H1 (cell line): ENCODE measurements at regions of chr11 and their contacts with region 1.

Region 1: GRCh38 chr11:2420502-2421225 is 20.1 kb downstream of the TSSC4 start:
- DNase-seq: peak; percentile 65 to 85
- H3K4me3 ChIP-seq: no peak overlapping the region
- H3K27ac ChIP-seq: no peak overlapping the region
- H3K4me1 ChIP-seq: peaks cover 0 to 5% (median under 1%) of the 10 kb centered on the region in 4 experiments; a peak in 2 of 7 replicates
- H3K27me3 ChIP-seq: peaks cover 0 to 3% (median 0%) of the 10 kb centered on the region in 4 experiments; a peak in 2 of 7 replicates
- CTCF ChIP-seq: peak in 2 of 3 experiments; percentile 94 to 97; a peak in 3 of 4 replicates
- EP300 ChIP-seq: no peak
- POLR2A ChIP-seq: no peak
- RAD21 ChIP-seq: peak; percentile 92 to 95

Region 2: DNA sequence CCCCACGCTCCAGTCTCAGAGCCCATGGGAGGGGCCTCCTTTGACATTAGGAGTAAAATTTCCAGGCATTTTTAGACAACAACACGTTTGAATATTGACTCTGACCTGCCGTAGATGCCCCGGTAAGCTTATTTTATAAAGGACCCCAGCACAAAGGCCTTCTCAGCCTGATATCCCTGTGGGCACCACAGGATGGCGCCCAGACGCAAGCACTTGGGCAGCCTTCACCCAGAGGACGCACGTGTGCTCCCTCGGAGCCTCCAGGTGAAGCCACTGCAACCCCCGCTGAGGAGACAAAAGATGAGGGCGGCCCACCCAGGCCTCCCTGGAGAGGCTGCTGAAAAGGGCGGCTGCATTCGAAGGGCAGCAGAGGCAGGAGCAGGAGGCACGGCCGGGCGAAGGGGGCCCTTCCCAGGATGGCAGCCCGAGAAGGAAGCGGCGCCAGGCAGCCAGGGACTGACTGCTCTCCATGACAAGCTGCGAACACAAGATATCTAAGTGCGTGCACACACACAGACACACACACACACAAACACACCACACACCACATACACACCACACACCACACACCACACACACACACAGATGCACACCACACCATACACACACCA is 233.9 kb before region 1 on chr11:
- CTCF ChIA-PET with region 1: interaction called, 50 read pairs
- POLR2A ChIA-PET with region 1: no interaction called
- DNase-seq: peak in 1 of 2 experiments; percentile 69
- H3K4me3 ChIP-seq: no peak overlapping the region
- H3K27ac ChIP-seq: no peak overlapping the region
- H3K4me1 ChIP-seq: no peaks in the 10 kb centered on the region; a peak in 2 of 7 replicates
- H3K27me3 ChIP-seq: peaks cover 0 to 16% (median 5%) of the 10 kb centered on the region in 4 experiments; a peak in 2 of 7 replicates
- CTCF ChIP-seq: peak; percentile 66 to 75 (median 69)
- EP300 ChIP-seq: no peak
- POLR2A ChIP-seq: no peak
- RAD21 ChIP-seq: peak; percentile 62 to 77

Region 3: DNA sequence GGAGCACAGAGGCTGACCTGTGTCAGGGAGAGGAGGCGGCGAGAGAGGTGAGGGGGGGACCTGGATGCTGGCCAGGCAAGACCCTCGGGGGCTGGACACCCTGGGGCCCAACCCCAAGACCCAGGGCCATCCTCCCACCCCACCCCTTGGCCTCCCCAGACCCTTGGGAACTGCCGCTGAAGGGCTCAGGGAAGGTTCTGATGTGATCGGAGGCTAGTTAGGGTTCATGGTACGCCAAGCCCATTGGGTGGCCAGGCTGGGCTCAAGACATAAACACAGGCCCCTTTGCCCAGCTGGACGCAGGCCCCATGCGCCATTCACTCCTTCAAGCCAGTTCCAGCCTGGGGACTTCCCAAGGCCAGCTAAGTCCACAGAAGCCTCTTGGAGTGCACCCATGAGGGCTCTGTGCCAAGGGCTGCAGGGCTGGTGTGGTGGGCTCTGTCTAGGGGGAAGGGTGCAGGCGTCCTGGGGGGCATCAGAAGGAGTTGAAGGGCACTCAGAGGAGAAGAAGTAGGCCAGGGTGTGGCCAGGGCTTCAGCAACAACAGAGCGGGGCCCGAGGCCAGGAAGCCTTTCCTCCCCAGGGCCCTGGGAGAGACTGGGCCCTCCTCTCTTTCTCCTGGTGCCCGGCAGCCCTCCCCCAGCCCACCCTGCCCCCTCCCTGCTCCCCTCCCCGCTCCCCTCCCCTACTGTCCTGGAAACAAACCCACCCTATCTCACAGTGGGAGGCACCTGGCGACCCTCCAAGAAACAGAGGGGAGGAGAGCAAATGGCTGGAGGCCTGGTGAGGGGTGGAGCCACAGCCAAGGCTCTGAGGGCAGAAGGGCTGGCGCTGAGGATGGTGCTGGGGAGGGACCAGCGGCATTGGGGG is 105.9 kb before region 1 on chr11:
- CTCF ChIA-PET with region 1: interaction called, 39 read pairs
- POLR2A ChIA-PET with region 1: no interaction called
- DNase-seq: no peak
- H3K4me3 ChIP-seq: no peak overlapping the region
- H3K27ac ChIP-seq: no peak overlapping the region
- H3K4me1 ChIP-seq: no peaks in the 10 kb centered on the region
- H3K27me3 ChIP-seq: peaks cover 0 to 1% (median 0%) of the 10 kb centered on the region in 4 experiments; a peak in 1 of 7 replicates
- CTCF ChIP-seq: no peak
- EP300 ChIP-seq: no peak
- POLR2A ChIP-seq: no peak
- RAD21 ChIP-seq: no peak

Region 4: DNA sequence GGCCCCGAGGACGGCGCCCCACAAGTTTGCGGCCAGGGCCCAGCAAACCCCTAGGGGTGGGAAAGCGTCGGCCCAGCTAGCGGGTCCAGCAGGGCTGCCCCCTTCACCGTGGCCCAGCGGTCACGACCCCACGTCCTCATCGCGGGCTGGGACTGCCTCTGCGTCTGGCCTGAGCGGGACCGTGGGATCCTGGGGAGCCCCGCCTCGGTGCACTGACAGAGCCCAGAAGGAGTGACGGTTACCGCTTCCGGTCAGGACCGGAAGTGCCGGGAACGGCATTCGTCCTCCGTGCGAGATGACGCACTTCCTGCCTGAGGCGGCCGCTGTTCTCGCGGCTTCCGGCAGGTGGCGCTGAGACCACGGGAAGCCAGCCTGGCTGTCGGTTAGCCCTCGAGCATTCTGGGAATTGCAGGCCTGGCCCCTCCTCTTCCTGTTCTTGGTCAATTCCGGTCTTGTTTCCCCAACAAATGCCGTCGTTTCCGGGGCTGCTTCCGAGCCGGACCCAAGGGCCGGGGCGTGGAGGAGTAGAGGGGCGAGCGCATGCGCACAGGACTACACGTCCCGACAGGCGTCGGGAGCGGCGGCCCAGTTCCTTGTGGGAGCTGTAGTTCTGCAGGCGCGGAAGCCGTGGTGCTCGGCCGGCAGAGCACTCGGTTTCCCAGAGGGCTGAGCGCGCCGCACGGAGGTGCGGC is 20.4 kb before region 1 on chr11 and contains the start of gene TSSC4:
- CTCF ChIA-PET with region 1: interaction called, 196 read pairs
- POLR2A ChIA-PET with region 1: interaction called, 17 read pairs
- DNase-seq: peak; percentile 100
- H3K4me3 ChIP-seq: peak within 1 kb of the TSS; percentile 86 to 98 (median 97)
- H3K27ac ChIP-seq: peak within 1 kb of the TSS; percentile 78
- H3K4me1 ChIP-seq: peaks cover 0 to 17% (median 6%) of the 10 kb centered on the region in 4 experiments; a peak in 5 of 7 replicates
- H3K27me3 ChIP-seq: no peaks in the 10 kb centered on the region
- CTCF ChIP-seq: peak in 2 of 3 experiments; percentile 92 to 100; a peak in 3 of 4 replicates
- EP300 ChIP-seq: no peak
- POLR2A ChIP-seq: peak in 1 of 2 experiments; percentile 61; a peak in 1 of 3 replicates
- RAD21 ChIP-seq: peak; percentile 74 to 76
- total RNA-seq, gene TSSC4: 39.3 and 44.3 TPM in 2 replicates

Region 5: DNA sequence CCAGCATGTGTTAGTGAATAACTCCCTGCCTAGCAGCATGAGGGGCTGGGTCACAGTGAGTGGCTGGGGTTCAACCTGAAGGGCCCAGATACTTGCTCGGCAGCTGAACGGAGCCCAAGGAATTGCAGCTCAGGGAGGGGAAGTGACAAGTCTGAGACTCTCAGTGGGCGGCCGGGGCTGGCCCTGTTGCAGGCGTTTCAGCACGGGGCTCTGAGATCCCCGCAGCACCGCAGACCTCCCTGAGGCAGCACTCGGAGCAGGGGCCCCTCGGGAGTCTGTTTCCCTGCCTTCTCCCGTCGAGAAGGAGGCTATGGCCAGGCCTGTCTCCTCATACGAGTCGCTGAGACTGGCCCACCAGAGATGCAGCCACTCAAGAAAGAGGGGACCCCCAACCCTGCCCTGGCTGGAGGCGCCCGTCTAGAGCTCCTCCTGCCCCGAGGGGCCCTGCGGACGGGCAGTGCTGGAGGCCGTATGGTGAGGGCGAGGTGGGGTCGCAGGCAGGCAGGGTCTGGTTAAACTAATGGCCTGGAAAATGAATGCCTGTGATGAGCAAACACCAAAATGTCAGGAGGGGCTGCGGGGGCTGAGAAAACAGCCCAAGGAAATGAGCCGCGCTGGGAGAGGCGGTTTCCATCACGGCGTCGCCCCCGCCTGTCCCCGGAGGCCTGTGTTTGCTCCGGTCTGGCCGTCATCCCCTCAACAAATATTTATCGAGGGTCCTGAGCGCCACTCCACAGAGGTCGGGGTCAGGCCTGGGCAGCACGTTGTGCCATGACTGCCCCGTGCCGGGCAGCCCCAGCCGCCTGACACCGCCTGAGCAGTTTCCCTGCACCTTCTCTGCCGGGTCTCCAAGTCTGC is 10.8 kb before region 1 on chr11:
- CTCF ChIA-PET with region 1: interaction called, 196 read pairs
- POLR2A ChIA-PET with region 1: interaction called, 17 read pairs
- DNase-seq: no peak
- H3K4me3 ChIP-seq: no peak overlapping the region
- H3K27ac ChIP-seq: no peak overlapping the region
- H3K4me1 ChIP-seq: no peaks in the 10 kb centered on the region
- H3K27me3 ChIP-seq: no peaks in the 10 kb centered on the region; a peak in 1 of 7 replicates
- CTCF ChIP-seq: no peak
- EP300 ChIP-seq: no peak
- POLR2A ChIP-seq: no peak
- RAD21 ChIP-seq: no peak

Region 6: DNA sequence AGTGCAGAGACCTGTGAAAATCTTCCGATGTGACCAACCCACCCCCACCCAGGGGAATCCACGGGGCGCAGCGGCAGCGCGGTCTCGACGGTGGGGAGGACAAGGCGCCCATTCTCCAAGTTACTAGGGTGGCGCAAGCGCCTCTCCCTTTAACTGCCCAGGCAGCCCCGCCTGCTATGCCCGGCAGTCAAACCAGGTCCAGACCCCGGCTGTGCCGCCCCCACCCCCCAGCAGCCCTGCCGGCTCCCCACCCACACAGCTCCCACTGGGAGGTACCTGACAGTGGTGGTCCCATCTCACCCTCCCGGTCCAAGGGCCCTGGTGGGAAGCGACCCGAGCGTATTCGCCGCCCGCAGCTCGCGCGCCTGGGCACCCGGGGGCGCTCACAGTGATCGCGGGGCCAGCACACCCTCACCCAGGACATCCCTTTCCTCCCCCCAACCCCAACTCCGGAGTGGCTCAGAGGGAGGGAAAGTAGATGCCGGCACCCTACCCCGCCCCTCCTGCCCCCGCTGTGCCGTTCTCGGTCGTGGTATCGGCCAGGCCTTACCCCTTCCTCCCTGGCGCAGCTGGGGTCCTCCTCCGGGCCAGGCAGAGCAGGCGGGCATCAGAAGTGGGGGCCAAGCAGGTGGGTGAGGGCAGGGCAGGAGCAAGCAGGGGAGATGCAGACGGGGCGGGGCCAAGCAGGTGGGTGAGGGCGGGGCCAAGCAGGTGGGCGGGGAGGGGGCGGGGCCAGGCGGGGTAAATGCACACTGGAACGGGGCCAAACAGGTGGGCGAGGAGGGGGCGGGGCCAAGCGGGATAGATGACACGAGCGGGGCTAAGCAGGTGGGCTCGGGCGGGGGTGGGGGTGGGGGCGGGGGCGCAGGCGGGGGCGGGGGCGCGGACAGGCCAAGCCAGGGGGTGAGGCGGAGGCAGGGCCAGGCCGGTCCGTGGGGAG is 23.5 kb after region 1 on chr11 and contains the start of gene TRPM5:
- CTCF ChIA-PET with region 1: interaction called, 14 read pairs
- POLR2A ChIA-PET with region 1: no interaction called
- DNase-seq: peak in 1 of 2 experiments; percentile 84
- H3K4me3 ChIP-seq: peak within 1 kb of the TSS; percentile 33 to 70 (median 54); a peak in 7 of 8 replicates
- H3K27ac ChIP-seq: no peak within 1 kb of the TSS
- H3K4me1 ChIP-seq: peaks cover 0 to 3% (median 3%) of the 10 kb centered on the region in 4 experiments; a peak in 2 of 7 replicates
- H3K27me3 ChIP-seq: peaks cover 27 to 71% (median 57%) of the 10 kb centered on the region in 4 experiments
- CTCF ChIP-seq: peak in 1 of 3 experiments; percentile 8; a peak in 1 of 4 replicates
- EP300 ChIP-seq: no peak
- POLR2A ChIP-seq: no peak
- RAD21 ChIP-seq: no peak
- total RNA-seq, gene TRPM5: 0.11 TPM in 1 of 2 replicates, not detected in the other

Region 7: GRCh38 chr11:2609345-2609744 is 188.7 kb after region 1 on chr11:
- CTCF ChIA-PET with region 1: no interaction called
- POLR2A ChIA-PET with region 1: no interaction called
- DNase-seq: no peak
- H3K4me3 ChIP-seq: no peak overlapping the region
- H3K27ac ChIP-seq: no peak overlapping the region
- H3K4me1 ChIP-seq: no peaks in the 10 kb centered on the region
- H3K27me3 ChIP-seq: peaks cover 25 to 77% (median 52%) of the 10 kb centered on the region in 4 experiments
- CTCF ChIP-seq: no peak
- EP300 ChIP-seq: no peak
- POLR2A ChIP-seq: no peak
- RAD21 ChIP-seq: no peak

Region 8: DNA sequence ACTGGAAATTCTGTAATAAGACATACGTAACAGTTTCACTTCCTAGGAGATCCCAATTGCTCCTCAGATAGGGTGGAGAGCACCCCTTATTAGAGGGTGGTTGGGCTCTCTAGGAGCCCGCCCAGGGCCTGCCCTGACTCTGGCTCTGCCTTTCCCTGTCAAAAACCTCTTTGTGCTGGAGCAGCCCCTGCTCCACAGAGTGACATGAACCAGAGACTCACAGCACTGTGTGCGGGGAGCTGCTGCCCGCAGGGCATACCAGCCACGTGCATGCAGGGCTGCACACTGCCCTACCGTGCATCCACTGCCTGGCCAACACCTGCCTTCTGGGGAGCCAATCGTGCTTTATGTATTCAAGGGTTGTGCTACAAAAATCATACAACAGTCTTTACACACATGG is 254.9 kb after region 1 on chr11:
- CTCF ChIA-PET with region 1: no interaction called
- POLR2A ChIA-PET with region 1: no interaction called
- DNase-seq: no peak
- H3K4me3 ChIP-seq: no peak overlapping the region
- H3K27ac ChIP-seq: no peak overlapping the region
- H3K4me1 ChIP-seq: peaks cover 0 to 7% (median 0%) of the 10 kb centered on the region in 4 experiments; a peak in 2 of 7 replicates
- H3K27me3 ChIP-seq: peaks cover 0 to 5% (median 0%) of the 10 kb centered on the region in 4 experiments; a peak in 3 of 7 replicates
- CTCF ChIP-seq: no peak
- EP300 ChIP-seq: no peak
- POLR2A ChIP-seq: no peak
- RAD21 ChIP-seq: no peak